PC-9 (cell line): ENCODE measurements at regions of chr6 and their contacts with region 1.

Region 1: GRCh38 chr6:17584241-17584803 is 15.8 kb upstream of the FAM8A1 start:
- DNase-seq: no peak
- H3K4me3 ChIP-seq: no peak overlapping the region
- H3K27ac ChIP-seq: no peak overlapping the region
- H3K4me1 ChIP-seq: peaks cover 5% of the 10 kb centered on the region; the same call in 1 of the 2 replicates
- H3K27me3 ChIP-seq: no peaks in the 10 kb centered on the region
- CTCF ChIP-seq: peak; percentile 90

Region 2: GRCh38 chr6:17156112-17156921 is 428.0 kb before region 1 on chr6:
- CTCF ChIA-PET with region 1: no interaction called
- POLR2A ChIA-PET with region 1: no interaction called
- intact Hi-C with region 1: loop called (anchors 1 kb)
- DNase-seq: peak; percentile 49 to 56
- H3K4me3 ChIP-seq: no peak overlapping the region
- H3K27ac ChIP-seq: no peak overlapping the region
- H3K4me1 ChIP-seq: no peaks in the 10 kb centered on the region
- H3K27me3 ChIP-seq: no peaks in the 10 kb centered on the region
- CTCF ChIP-seq: peak; percentile 94

Region 3: GRCh38 chr6:17417817-17418216 is 166.5 kb before region 1 on chr6:
- CTCF ChIA-PET with region 1: no interaction called
- POLR2A ChIA-PET with region 1: interaction called, 6 read pairs
- intact Hi-C with region 1: loop called (anchors 10 kb)
- DNase-seq: peak; percentile 61 to 70
- H3K4me3 ChIP-seq: no peak overlapping the region
- H3K27ac ChIP-seq: peak overlapping the region; percentile 67
- H3K4me1 ChIP-seq: peaks cover 23% of the 10 kb centered on the region; the same call in 1 of the 2 replicates
- H3K27me3 ChIP-seq: no peaks in the 10 kb centered on the region
- CTCF ChIP-seq: no peak

Region 4: DNA sequence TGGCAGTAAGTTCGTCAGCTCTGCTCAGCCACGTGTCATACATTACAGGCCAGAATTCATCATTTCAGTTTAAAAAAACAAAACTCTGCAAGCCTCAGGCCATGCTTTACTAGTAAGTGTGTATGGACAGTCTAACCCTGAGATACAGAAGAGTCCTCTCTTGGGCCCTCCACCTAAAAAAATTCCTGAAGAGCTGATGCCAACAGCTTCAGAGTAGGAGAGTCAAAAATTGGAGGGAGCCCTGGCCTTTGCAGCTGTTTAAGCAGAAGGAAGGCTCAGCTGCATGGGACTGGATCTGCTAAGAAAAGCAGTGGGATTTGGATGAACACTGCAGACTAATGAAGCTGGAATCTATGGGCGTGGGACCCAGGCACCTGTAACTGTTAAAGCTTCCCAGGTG is 31.5 kb before region 1 on chr6:
- CTCF ChIA-PET with region 1: no interaction called
- POLR2A ChIA-PET with region 1: no interaction called
- intact Hi-C with region 1: no loop called
- DNase-seq: no peak
- H3K4me3 ChIP-seq: no peak overlapping the region
- H3K27ac ChIP-seq: no peak overlapping the region
- H3K4me1 ChIP-seq: no peaks in the 10 kb centered on the region
- H3K27me3 ChIP-seq: no peaks in the 10 kb centered on the region
- CTCF ChIP-seq: no peak

Region 5: DNA sequence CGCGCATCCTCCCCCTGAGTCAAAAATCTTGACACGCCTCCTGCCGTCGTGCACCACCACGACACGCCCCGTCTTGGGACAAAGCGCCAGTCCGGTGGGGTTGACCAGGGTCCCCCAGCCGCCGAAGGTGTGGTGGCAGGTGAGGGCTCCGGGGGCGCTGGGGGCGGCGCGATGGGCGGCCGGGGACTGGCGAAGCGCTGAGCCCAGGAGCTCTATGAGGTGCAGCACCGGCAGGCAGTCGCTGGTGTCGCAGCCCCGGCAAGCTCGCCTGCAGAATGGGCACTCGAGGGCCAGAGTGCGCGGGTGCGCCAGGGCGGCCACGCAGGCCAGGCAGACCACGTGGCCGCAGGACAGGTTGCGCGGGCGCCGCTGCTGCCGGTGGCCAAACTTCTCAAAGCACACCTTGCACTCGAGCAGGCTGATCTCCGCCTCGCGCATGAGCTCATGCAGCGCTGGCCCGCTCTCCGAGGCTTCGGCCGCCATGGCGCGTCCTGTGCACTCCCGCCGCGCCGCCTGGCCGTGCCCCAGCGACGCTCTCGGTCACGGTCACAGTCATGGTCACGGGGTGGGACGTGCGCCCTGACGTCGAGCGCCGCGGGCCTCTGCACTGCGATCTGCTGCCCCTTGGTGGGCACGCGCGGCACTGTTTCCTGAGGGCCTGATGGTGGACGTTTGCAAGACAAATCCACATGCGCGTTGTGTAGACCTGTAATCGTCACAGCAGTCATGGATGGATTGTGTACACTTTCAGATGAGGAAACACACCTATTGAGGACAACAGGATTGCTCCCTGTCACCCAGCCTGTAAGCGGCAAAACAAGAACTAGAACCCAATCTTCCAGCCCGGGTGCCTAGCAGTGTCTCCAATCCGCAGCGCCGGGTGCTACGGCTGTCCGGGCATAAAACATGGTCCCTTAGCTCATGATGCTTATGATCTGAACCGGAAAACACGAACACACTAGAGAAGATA is 538.1 kb after region 1 on chr6 and contains the start of gene NHLRC1:
- CTCF ChIA-PET with region 1: no interaction called
- POLR2A ChIA-PET with region 1: no interaction called
- intact Hi-C with region 1: loop called (anchors 10 kb)
- DNase-seq: peak; percentile 42 to 88
- H3K4me3 ChIP-seq: peak within 1 kb of the TSS; percentile 19; the same call in 1 of the 2 replicates
- H3K27ac ChIP-seq: no peak within 1 kb of the TSS
- H3K4me1 ChIP-seq: no peaks in the 10 kb centered on the region
- H3K27me3 ChIP-seq: no peaks in the 10 kb centered on the region
- CTCF ChIP-seq: peak; percentile 76
- total RNA-seq, gene NHLRC1: 0.90 and 1.0 TPM in 2 replicates